Panc1 (cell line): ENCODE measurements at regions of chr16 and their contacts with region 1.

Region 1: DNA sequence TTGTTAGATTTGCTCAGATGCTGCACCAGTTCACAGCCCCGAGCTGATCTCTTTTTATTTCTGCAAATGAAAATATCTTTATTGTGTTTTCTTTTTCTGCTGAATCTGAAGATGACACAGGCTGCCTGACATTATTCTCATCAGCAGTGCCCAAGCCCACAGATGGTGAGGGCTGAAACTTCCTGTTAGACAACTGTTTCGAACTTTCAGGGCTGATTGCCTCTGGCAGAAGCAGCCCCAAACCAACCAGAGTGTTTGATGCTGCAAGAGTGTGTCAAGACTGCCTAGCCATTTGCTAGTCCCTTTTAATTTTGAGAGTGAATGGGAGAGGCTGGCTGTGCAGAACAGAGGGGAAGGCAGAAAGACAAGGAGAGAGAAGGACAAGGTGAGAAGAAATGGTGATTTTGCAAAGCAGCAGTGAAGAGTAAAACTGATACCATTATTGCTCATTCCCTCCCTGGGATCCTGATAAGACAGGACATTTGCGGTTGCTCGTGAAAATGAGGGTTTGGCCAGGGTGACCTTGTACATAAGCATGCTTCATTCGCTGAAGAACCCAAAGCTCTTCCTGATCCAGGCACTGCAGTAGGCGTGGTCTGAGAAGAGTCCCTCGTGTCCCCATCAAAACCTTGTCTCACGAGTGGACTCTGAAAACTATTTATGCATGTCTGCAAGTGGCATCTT is 77.2 kb downstream of the TMEM114 start:
- DNase-seq: no peak
- ATAC-seq: no peak
- H3K4me3 ChIP-seq: no peak overlapping the region
- H3K27ac ChIP-seq: no peak overlapping the region
- H3K4me1 ChIP-seq: no peaks in the 10 kb centered on the region
- H3K27me3 ChIP-seq: peaks cover 14% of the 10 kb centered on the region
- CTCF ChIP-seq: no peak

Region 2: DNA sequence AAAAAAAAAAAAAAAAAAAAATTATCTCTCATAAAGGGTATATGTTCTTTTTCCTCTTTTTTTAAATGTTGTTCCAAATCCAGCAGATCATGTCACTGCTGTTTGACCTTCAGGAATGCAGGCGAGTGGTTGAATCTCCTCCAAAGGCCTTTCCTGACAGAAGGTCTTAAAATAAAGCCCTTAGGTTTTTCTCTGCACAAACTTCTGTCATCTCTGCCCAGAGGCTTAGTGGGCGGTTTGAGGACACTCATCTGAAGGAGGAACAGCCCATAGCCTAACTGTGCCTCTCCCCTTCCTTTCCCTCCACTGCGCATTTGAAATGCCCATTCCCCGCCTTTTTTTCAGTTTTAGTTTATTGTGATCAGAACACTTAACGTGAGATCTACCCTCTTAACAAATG is 193.0 kb before region 1 on chr16:
- CTCF ChIA-PET with region 1: interaction called, 11 read pairs
- POLR2A ChIA-PET with region 1: no interaction called
- in situ Hi-C with region 1: no loop called
- intact Hi-C with region 1: no loop called
- DNase-seq: no peak
- ATAC-seq: no peak
- H3K4me3 ChIP-seq: no peak overlapping the region
- H3K27ac ChIP-seq: no peak overlapping the region
- H3K4me1 ChIP-seq: no peaks in the 10 kb centered on the region
- H3K27me3 ChIP-seq: no peaks in the 10 kb centered on the region
- CTCF ChIP-seq: no peak

Region 3: DNA sequence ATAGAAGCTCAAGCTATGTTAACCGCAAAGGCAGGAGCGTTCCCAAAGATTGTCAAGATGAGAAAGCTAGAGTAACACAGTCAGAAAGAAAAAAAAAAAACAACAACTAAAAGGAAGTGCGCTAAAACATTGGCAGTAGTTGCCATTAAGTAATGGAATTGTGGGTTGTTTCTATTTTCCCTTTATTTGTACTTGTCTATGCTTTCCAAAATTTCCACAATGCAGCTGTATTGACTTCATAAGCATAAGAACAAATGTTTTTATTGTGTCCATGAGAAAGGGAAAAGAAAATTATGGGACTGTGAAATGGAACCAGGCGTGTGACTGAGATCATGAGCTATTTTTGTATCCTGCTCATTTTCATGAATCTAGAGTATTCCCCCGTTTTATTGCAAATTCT is 76.2 kb before region 1 on chr16:
- CTCF ChIA-PET with region 1: interaction called, 10 read pairs
- POLR2A ChIA-PET with region 1: no interaction called
- in situ Hi-C with region 1: no loop called
- intact Hi-C with region 1: no loop called
- DNase-seq: no peak
- ATAC-seq: no peak
- H3K4me3 ChIP-seq: no peak overlapping the region
- H3K27ac ChIP-seq: no peak overlapping the region
- H3K4me1 ChIP-seq: no peaks in the 10 kb centered on the region
- H3K27me3 ChIP-seq: peaks cover 3% of the 10 kb centered on the region; the same call in 1 of the 2 replicates
- CTCF ChIP-seq: no peak